GM18951 (cell line): ENCODE measurements at regions of chr17 and their contacts with region 1.

Region 1: GRCh38 chr17:50200457-50201275 is 765 bp downstream of the COL1A1 start:
- POLR2A ChIP-seq: no peak

Region 2: DNA sequence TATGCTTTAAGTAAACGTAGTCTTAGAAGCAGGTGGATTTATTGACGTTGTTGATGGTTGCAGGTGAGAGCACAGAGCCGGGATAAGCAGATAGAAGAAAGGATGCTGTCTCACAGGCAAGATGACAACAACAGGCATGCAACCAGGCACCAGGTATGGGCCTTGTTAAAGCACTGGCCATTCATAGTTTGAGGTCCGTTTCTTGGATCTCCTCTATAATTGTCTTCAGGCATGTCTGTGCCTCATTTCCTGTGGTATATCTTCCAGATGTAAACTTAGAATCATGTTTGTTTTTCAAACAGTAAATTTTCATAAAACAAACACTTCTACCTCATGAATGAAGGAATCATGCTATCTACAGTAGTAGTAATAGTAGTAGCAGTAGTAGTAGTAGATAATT is 391.6 kb before region 1 on chr17:
- in situ Hi-C with region 1: no loop called
- POLR2A ChIP-seq: no peak

Region 3: GRCh38 chr17:49910094-49910857 is 290.4 kb before region 1 on chr17:
- in situ Hi-C with region 1: no loop called
- POLR2A ChIP-seq: no peak

Region 4: GRCh38 chr17:50269477-50270434 is 69.1 kb after region 1 on chr17:
- in situ Hi-C with region 1: loop called (anchors 10 kb)
- POLR2A ChIP-seq: no peak

Region 5: DNA sequence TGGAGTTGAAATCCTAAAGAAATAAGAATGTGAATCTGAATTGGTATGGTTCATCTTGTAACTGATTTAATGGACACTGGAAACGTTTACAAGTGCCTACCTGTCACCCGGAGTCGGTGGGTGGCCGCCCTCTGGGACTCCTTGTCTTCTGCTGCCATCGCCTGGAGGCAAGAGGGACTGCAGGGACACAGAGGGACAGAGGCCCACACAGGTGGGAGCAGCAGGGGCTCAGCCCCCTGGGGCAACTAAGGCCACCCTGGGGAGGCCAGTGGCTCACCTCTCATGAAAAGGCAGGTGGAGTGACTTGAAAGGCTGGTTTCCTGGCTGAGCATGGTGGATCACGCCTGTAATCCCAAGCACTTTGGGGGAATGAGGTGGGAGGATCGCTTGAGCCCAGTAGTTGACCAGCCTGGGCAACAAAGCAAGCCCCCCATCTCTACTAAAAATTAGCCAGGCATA is 96.8 kb after region 1 on chr17:
- in situ Hi-C with region 1: loop called (anchors 10 kb)
- POLR2A ChIP-seq: no peak